Activated CD4-positive, alpha-beta memory T cell treated with anti-CD3 and anti-CD28 coated beads for 36 hours (primary cell): ENCODE measurements at regions of chr3 and their contacts with region 1.

Region 1: GRCh38 chr3:172332256-172333041 is 115.8 kb downstream of the GHSR start:
- DNase-seq: peak; percentile 64
- H3K4me3 Mint-ChIP-seq: no peak overlapping the region
- H3K27ac Mint-ChIP-seq: no peak overlapping the region
- H3K4me1 Mint-ChIP-seq: peaks cover 8% of the 10 kb centered on the region
- H3K27me3 Mint-ChIP-seq: no peaks in the 10 kb centered on the region

Region 2: DNA sequence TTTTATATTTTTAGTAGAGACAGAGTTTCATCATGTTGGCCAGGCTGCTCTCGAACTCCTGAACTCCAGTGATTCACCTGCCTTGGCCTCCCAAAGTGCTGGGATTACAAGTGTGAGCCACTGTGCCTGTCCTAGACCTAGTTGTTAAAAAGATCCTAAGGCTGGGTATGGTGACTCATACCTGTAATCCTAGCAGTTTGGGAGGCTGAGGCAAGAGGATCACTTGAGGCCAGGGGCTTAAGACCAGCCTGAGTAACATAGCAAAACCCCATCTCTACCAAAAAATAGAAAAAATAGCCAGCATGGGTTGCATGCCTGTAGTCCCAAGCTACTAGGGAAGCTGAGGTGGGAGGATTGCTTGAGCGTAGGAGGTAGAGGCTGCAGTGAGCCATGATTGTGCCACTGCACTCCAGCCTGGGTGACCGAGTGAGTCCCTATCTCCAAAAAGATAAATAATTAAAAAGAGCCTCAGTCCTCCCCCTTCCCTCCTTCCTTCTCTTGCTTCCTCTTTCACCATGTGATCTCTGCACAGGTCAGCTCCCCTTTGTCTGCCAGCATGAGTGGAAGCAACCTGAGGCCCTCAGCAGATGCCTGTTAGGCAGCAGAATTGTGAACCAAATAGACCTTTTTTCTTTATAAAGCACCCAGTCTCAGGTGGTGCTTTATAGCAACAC is 302.9 kb before region 1 on chr3:
- CTCF ChIA-PET with region 1: interaction called, 28 read pairs
- POLR2A ChIA-PET with region 1: no interaction called
- intact Hi-C with region 1: no loop called
- DNase-seq: no peak
- H3K4me3 Mint-ChIP-seq: no peak overlapping the region
- H3K27ac Mint-ChIP-seq: no peak overlapping the region
- H3K4me1 Mint-ChIP-seq: no peaks in the 10 kb centered on the region
- H3K27me3 Mint-ChIP-seq: no peaks in the 10 kb centered on the region

Region 3: GRCh38 chr3:172307141-172307560 is 25.3 kb before region 1 on chr3:
- CTCF ChIA-PET with region 1: interaction called, 10 read pairs
- POLR2A ChIA-PET with region 1: no interaction called
- intact Hi-C with region 1: no loop called
- DNase-seq: no peak
- H3K4me3 Mint-ChIP-seq: no peak overlapping the region
- H3K27ac Mint-ChIP-seq: no peak overlapping the region
- H3K4me1 Mint-ChIP-seq: no peaks in the 10 kb centered on the region
- H3K27me3 Mint-ChIP-seq: no peaks in the 10 kb centered on the region

Region 4: GRCh38 chr3:172321035-172321434 is 11.4 kb before region 1 on chr3:
- CTCF ChIA-PET with region 1: interaction called, 27 read pairs
- POLR2A ChIA-PET with region 1: no interaction called
- intact Hi-C with region 1: no loop called
- DNase-seq: no peak
- H3K4me3 Mint-ChIP-seq: no peak overlapping the region
- H3K27ac Mint-ChIP-seq: no peak overlapping the region
- H3K4me1 Mint-ChIP-seq: peaks cover 25% of the 10 kb centered on the region
- H3K27me3 Mint-ChIP-seq: no peaks in the 10 kb centered on the region

Region 5: DNA sequence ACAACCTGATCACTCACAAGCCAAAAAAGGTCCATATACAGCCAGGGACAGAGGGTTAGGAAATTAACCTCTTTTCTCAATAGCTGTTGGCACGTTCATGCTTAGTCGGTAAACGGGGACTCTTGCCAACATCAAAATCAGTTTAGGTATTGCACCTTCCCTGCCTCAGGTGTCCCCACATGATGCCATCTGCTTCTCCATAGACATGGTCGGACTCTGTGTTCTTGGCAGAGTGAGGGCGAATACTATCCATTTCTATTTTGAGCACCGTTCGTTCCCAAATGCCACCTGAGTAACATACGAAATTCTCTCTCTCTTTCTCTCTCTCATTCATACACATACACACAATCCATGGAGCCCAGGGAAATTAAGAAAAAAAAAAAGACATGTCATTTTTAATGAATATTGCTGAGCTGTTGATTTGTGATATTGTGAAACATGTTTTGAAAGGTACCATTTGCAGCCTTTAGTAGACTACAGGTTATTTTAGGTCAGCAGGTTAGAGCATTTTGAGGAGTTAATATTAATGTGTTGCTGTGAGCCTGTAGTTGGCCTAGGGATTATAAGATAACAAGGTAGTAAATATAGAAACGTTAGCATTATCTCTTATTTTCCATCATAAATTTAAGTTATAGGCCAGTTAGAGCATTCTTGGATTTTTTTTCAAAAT is 37.3 kb after region 1 on chr3:
- CTCF ChIA-PET with region 1: no interaction called
- POLR2A ChIA-PET with region 1: no interaction called
- intact Hi-C with region 1: no loop called
- DNase-seq: no peak
- H3K4me3 Mint-ChIP-seq: no peak overlapping the region
- H3K27ac Mint-ChIP-seq: no peak overlapping the region
- H3K4me1 Mint-ChIP-seq: no peaks in the 10 kb centered on the region
- H3K27me3 Mint-ChIP-seq: no peaks in the 10 kb centered on the region

Region 6: DNA sequence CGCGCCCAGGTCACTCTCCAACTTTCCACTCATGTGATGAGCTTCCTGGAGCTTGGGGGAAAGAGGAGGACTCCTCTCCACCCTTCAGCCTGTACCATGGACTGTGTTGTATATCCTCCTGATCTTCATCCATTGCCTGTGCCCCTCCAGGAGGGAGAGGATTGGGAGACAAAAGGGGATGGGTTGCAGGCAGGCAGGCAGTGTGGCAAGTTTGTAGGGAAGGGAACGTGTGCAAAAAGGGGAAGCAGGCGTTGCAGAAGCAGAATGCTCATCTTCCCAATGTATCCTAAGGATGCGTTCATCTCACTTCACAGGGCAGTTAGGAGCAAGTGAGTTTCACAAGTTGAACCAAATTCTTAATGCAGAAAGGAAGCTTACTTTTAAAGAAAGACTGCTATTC is 143.9 kb after region 1 on chr3:
- CTCF ChIA-PET with region 1: interaction called, 5 read pairs
- POLR2A ChIA-PET with region 1: no interaction called
- intact Hi-C with region 1: loop called (anchors 1 kb)
- DNase-seq: no peak
- H3K4me3 Mint-ChIP-seq: peak overlapping the region; percentile 30
- H3K27ac Mint-ChIP-seq: no peak overlapping the region
- H3K4me1 Mint-ChIP-seq: peaks cover 17% of the 10 kb centered on the region
- H3K27me3 Mint-ChIP-seq: no peaks in the 10 kb centered on the region

Region 7: GRCh38 chr3:172666873-172667694 is 334.6 kb after region 1 on chr3:
- CTCF ChIA-PET with region 1: interaction called, 17 read pairs
- POLR2A ChIA-PET with region 1: no interaction called
- intact Hi-C with region 1: loop called (anchors 1 kb)
- DNase-seq: peak; percentile 82
- H3K4me3 Mint-ChIP-seq: no peak overlapping the region
- H3K27ac Mint-ChIP-seq: no peak overlapping the region
- H3K4me1 Mint-ChIP-seq: peaks cover 14% of the 10 kb centered on the region
- H3K27me3 Mint-ChIP-seq: no peaks in the 10 kb centered on the region